ENCODE measurements at regions of chr4 and their contacts with region 1.

Region 1: GRCh38 chr4:154618708-154619315 is 6.4 kb upstream of the FGG start:
- DNase-seq: peak; percentile 41
- H3K4me3 ChIP-seq: no peak overlapping the region
- H3K27ac ChIP-seq: no peak overlapping the region
- H3K4me1 ChIP-seq: no peaks in the 10 kb centered on the region
- H3K27me3 ChIP-seq: no peaks in the 10 kb centered on the region
- CTCF ChIP-seq: peak; percentile 76 to 78

Region 2: GRCh38 chr4:154329268-154329868 is 289.4 kb before region 1 on chr4:
- CTCF ChIA-PET with region 1: interaction called, 4 read pairs
- dilution Hi-C with region 1: no loop called
- in situ Hi-C with region 1: no loop called
- intact Hi-C with region 1: loop called (anchors 1 kb)
- DNase-seq: peak; percentile 21
- H3K4me3 ChIP-seq: no peak overlapping the region
- H3K27ac ChIP-seq: no peak overlapping the region
- H3K4me1 ChIP-seq: no peaks in the 10 kb centered on the region
- H3K27me3 ChIP-seq: no peaks in the 10 kb centered on the region
- CTCF ChIP-seq: peak; percentile 36 to 45

Region 3: DNA sequence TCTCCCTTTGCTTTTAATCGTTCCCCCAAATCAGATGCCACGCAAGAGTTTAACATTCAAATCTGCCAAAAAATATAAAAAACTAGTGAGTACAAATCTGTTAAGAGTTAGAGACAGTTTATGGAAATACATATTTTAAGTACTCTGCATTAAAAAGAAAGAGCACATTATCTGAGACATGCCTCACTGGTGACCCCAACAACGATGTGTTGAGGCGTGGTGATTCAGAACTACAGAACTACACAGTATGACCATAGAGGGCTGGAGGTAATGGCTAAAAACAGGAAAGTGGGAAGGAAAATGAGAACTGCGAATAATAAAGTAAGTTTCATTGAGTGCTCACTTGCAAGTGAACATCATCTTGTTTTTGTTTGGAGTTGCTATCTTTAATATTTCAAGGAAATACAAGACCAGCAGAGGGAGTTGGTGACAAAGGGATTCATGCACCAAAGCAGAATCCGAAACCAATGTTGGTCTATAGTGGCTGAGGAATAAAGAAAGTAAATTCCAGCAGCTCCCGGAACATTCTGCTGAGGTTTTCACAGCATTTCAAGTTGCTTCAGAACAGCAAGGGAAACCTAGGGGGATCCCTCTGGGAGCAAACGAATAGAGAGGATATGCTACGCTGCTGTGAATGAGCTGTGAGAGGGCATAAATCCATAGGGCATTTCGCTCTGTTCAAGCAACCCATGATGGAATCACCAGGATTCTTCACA is 219.4 kb before region 1 on chr4:
- CTCF ChIA-PET with region 1: no interaction called
- dilution Hi-C with region 1: no loop called
- in situ Hi-C with region 1: no loop called
- intact Hi-C with region 1: loop called (anchors 5 kb)
- DNase-seq: peak; percentile 19
- H3K4me3 ChIP-seq: peak overlapping the region in 1 of 3 experiments; percentile 12
- H3K27ac ChIP-seq: no peak overlapping the region
- H3K4me1 ChIP-seq: no peaks in the 10 kb centered on the region
- H3K27me3 ChIP-seq: no peaks in the 10 kb centered on the region
- CTCF ChIP-seq: peak; percentile 26 to 56

Region 4: GRCh38 chr4:154559494-154560418 is 59.1 kb before region 1 on chr4:
- CTCF ChIA-PET with region 1: interaction called, 32 read pairs
- dilution Hi-C with region 1: loop called (anchors 5 kb)
- in situ Hi-C with region 1: loop called (anchors 5 kb)
- intact Hi-C with region 1: loop called (anchors 1 kb)
- DNase-seq: peak; percentile 63
- H3K4me3 ChIP-seq: no peak overlapping the region
- H3K27ac ChIP-seq: no peak overlapping the region
- H3K4me1 ChIP-seq: peaks cover 23% of the 10 kb centered on the region
- H3K27me3 ChIP-seq: no peaks in the 10 kb centered on the region
- CTCF ChIP-seq: peak; percentile 68 to 72

Region 5: DNA sequence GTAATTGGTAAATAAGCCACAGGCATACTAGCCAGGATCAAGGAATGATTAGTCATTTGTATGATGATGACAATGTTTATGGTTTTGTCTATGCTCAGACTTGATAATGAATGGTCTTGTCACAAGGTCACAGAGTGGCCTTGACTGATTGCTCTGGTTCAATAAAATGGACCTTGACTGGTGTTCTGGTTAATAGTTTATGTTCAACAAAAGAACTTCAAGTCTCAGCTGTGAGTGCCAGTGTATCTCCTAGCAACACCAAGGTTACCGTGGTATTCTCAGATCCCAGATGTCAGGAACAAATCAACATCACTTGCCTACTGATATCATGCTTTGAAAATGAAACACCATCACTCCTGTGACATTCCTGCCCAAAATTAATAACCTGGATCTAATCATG is 108.7 kb after region 1 on chr4:
- CTCF ChIA-PET with region 1: no interaction called
- dilution Hi-C with region 1: no loop called
- in situ Hi-C with region 1: no loop called
- intact Hi-C with region 1: no loop called
- DNase-seq: no peak
- H3K4me3 ChIP-seq: no peak overlapping the region
- H3K27ac ChIP-seq: no peak overlapping the region
- H3K4me1 ChIP-seq: peaks cover 13% of the 10 kb centered on the region
- H3K27me3 ChIP-seq: no peaks in the 10 kb centered on the region
- CTCF ChIP-seq: no peak